Heart left ventricle (tissue), 16 donors: ENCODE measurements at regions of chr10 and their contacts with region 1.

Region 1: GRCh38 chr10:113563306-113564088 is 10.6 kb downstream of the HABP2 start:
- DNase-seq: peak; percentile 64 to 87 (median 71)
- ATAC-seq: peak; percentile 59 to 93 (median 88)
- H3K4me3 ChIP-seq: peak overlapping the region in 10 of 12 donors; percentile 20 to 55 (median 46)
- H3K27ac ChIP-seq: no peak overlapping the region
- H3K4me1 ChIP-seq: peaks cover 0 to 5% (median 0%) of the 10 kb centered on the region in 12 donors
- H3K27me3 ChIP-seq: peaks cover 0 to 4% (median 0%) of the 10 kb centered on the region in 9 donors
- CTCF ChIP-seq: peak; percentile 96 to 100 (median 98)
- POLR2A ChIP-seq: no peak

Region 2: DNA sequence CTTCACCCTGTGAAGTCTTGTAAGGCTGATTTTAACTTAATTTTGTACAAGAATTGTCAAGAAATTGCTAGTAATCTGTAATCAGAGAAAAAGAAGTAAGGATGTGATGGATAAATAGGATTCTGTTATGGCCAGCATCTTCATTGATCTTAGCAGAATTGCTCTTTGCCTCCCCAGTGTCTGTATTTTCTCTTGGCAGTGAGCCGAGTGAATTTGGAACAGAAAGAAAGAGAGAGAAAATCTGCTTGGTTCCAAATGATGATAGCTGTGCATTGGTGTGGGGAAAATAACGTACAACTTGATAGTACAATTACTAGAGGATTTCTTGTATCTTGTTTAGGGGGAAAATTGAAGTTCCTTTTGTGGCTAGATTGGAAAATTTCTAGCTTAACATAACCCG is 1081.9 kb before region 1 on chr10:
- intact Hi-C with region 1: loop called in 1 of 10 experiments (anchors 10 kb)
- DNase-seq: no peak
- ATAC-seq: no peak
- H3K4me3 ChIP-seq: no peak overlapping the region
- H3K27ac ChIP-seq: no peak overlapping the region
- H3K4me1 ChIP-seq: no peaks in the 10 kb centered on the region
- H3K27me3 ChIP-seq: no peaks in the 10 kb centered on the region
- CTCF ChIP-seq: peak in 1 of 12 donors; percentile 5
- POLR2A ChIP-seq: no peak

Region 3: DNA sequence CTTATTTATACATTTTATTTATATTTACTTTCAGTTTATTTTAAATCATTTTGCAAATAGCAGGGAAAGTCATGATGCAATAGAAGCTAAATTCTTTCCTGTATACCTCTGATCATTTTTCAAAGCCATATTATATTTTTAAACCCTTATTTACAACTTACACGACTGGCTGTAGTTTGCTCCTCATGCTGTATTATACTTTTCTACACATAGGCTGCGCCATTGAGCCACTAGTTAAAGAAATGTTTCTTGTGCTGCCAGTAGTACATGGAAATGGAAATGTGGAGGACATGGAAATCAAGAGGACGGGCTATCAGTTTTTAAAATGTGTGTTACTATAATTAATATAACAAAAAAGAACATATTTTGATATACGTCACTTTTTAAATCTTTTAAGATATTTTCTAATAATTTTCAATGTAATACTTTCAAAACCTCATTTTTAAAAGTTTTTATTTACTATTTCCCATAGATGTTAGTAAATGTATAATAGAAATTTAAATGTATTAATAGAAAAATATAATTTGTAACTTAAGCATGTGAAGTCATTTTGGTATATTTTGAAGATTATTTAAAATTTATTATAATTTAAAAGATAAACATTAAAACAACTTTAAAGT is 998.0 kb before region 1 on chr10:
- intact Hi-C with region 1: loop called in 2 of 10 experiments (anchors 5 to 10 kb)
- DNase-seq: peak in 2 of 5 donors; percentile 15 to 28
- ATAC-seq: peak in 3 of 4 donors; percentile 48 to 67 (median 51)
- H3K4me3 ChIP-seq: no peak overlapping the region
- H3K27ac ChIP-seq: no peak overlapping the region
- H3K4me1 ChIP-seq: no peaks in the 10 kb centered on the region
- H3K27me3 ChIP-seq: no peaks in the 10 kb centered on the region
- CTCF ChIP-seq: peak; percentile 44 to 73 (median 62)
- POLR2A ChIP-seq: no peak

Region 4: DNA sequence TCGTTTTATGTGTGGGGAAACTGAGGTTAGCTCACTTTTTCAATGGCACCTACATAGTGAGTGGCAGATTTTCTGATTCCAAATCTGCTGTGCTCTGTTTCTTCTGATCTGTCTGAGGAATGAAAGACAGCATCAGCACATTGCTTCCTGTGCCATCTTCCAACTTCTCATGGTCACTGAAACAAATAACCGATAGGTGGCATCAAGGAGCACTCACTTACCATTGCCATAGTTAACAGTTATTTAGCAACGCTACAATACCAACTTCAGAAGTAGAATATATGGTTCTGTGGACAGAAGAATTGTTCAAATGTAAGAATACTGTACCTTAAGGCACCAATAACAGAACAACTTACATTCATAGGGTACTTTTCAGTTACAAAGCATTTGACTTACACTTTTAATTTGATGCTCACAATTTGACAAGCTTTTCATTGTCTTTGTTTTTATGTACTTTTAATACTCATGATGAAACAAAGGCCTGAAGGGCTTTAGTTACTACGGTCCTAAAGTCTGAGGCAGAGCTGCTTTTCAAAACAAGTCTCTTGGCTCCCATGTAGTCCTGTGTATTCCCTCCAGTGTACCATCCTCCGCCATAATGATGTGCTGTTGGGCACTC is 842.3 kb before region 1 on chr10:
- intact Hi-C with region 1: loop called in 1 of 10 experiments (anchors 10 kb)
- DNase-seq: no peak
- ATAC-seq: peak in 3 of 4 donors; percentile 45 to 64 (median 56)
- H3K4me3 ChIP-seq: no peak overlapping the region
- H3K27ac ChIP-seq: no peak overlapping the region
- H3K4me1 ChIP-seq: peaks cover 0 to 3% (median 0%) of the 10 kb centered on the region in 12 donors
- H3K27me3 ChIP-seq: no peaks in the 10 kb centered on the region
- CTCF ChIP-seq: peak; percentile 44 to 78 (median 66)
- POLR2A ChIP-seq: no peak

Region 5: GRCh38 chr10:113521123-113521795 is 42.2 kb before region 1 on chr10:
- intact Hi-C with region 1: loop called in 1 of 10 experiments (anchors 5 kb)
- DNase-seq: peak in 4 of 5 donors; percentile 60 to 75 (median 68)
- ATAC-seq: peak; percentile 79 to 90 (median 83)
- H3K4me3 ChIP-seq: no peak overlapping the region
- H3K27ac ChIP-seq: no peak overlapping the region
- H3K4me1 ChIP-seq: peaks cover 0 to 7% (median 0%) of the 10 kb centered on the region in 12 donors
- H3K27me3 ChIP-seq: no peaks in the 10 kb centered on the region
- CTCF ChIP-seq: peak; percentile 84 to 97 (median 93)
- POLR2A ChIP-seq: no peak

Region 6: DNA sequence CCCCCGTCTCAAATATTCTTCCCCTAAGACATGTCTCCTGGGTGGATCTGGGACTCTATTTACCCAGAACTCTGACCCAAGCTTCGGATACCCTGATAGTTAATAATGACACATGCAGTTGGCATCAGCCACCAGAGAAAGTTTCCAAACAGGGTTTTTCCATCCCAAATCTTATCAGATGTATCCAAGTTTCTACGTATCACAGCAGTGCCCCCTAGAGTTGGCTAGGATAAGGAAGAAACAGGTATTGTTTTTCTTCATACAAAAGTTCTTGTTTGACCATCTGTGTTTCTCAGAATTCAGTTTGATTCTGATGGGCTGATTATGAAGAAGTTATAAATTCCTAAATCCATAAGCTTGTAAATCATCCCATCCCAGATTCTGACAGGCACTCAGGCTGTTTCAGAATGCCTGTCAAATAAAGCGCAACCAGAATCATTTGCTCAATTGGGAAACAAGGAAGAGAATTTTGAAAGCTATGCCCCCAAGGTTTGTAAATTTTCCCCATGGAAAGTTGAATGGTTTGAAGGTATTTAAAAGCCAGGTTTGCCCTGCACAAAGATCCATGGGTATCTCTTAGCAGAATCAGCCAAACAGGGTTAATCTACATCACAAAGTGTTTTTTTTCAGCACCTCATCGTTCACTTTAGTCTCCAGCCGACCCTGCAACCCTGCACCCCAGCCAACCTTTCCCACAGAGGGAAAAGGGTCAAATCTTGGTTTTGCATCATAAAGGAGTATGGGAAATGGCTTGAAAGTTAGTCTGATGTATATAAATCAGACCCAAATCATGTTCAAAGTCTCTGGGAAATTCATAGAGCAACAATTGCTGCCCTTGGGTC is 53.0 kb after region 1 on chr10:
- intact Hi-C with region 1: no loop called
- DNase-seq: no peak
- ATAC-seq: no peak
- H3K4me3 ChIP-seq: no peak overlapping the region
- H3K27ac ChIP-seq: no peak overlapping the region
- H3K4me1 ChIP-seq: peaks cover 0 to 59% (median 21%) of the 10 kb centered on the region in 12 donors
- H3K27me3 ChIP-seq: peaks cover 0 to 34% (median 0%) of the 10 kb centered on the region in 9 donors
- CTCF ChIP-seq: peak in 5 of 12 donors; percentile 9 to 33 (median 27)
- POLR2A ChIP-seq: no peak